Dorsolateral prefrontal cortex (tissue), 120 donors: ENCODE measurements at regions of chr19 and their contacts with region 1.

Region 1: GRCh38 chr19:48363810-48364563 is at the starts of genes SYNGR4 and TMEM143:
- DNase-seq: peak; percentile 96 to 99 (median 98)
- H3K4me3 ChIP-seq: peak within 1 kb of the TSS; percentile 49 to 95 (median 79)
- H3K27ac ChIP-seq: peak within 1 kb of the TSS; percentile 83 to 100 (median 99)
- H3K27me3 ChIP-seq: no peaks in the 10 kb centered on the region
- CTCF ChIP-seq: peak in 21 of 56 donors; percentile 5 to 49 (median 19)
- total RNA-seq, gene SYNGR4: 0.50 to 3.0 (median 0.83) TPM in 13 of 120 experiments, not detected in the others
- total RNA-seq, gene TMEM143: 9.2 to 32.0 (median 16.5) TPM

Region 2: DNA sequence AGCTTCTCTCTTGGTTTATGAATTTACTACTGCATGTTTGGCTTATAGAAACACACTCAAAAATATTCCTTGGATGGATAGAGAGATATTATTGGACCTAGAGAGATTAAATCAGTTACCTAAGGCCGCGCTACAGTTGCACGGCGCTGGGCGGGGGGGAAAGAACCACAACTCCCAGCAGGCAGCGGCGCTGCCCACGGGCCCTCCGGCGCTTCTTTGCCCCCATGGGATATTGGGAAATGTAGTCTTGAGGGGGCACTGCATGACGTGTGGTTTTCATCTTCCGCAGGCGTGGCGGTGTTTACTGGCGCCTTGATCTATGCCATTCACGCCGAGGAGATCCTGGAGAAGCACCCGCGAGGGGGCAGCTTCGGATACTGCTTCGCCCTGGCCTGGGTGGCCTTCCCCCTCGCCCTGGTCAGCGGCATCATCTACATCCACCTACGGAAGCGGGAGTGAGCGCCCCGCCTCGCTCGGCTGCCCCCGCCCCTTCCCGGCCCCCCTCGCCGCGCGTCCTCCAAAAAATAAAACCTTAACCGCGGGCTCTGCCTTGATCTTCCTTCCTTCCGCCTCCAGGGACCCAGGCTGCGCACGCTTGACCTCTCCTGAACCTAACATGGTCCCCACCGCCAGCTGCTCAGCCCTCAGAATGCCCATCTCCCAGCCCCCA is 33.8 kb before region 1 on chr19:
- intact Hi-C with region 1: loop called in 1 of 2 experiments (anchors 1 kb)
- DNase-seq: peak; percentile 81 to 94 (median 92)
- H3K4me3 ChIP-seq: peak overlapping the region; percentile 52 to 93 (median 75)
- H3K27ac ChIP-seq: peak overlapping the region; percentile 73 to 99 (median 96)
- H3K27me3 ChIP-seq: no peaks in the 10 kb centered on the region
- CTCF ChIP-seq: peak in 49 of 56 donors; percentile 8 to 64 (median 39)

Region 3: DNA sequence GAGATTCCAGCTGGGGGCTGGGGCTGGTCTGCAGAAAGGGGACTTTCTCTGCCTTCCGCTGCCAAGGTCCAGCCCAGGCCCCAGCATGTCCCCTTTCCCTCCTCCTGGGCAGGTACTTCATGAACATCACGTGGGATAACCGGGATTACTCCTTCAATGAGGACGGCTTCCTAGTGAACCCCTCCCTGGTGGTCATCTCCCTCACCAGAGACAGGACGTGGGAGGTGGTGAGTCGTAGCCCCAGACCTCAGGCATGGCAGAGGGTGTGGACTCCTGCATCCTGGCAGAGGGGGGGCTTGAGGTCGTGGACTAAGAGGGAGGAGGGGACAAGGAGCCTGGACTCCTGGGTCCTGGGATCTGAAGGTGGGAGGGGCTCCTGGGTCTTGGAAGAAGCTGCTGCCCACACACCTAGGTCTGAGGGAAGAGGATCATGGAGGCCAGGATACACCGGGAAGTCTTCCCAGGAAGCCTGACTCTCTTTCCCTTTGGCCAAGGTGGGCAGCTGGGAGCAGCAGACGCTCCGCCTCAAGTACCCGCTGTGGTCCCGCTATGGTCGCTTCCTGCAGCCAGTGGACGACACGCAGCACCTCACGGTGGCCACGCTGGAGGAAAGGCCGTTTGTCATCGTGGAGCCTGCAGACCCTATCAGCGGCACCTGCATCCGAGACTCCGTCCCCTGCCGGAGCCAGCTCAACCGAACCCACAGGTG is 50.0 kb after region 1 on chr19:
- intact Hi-C with region 1: no loop called
- DNase-seq: no peak
- H3K4me3 ChIP-seq: peak overlapping the region in 1 of 59 donors; percentile 18
- H3K27ac ChIP-seq: no peak overlapping the region
- H3K27me3 ChIP-seq: peaks cover 0 to 35% (median 0%) of the 10 kb centered on the region in 45 donors
- CTCF ChIP-seq: no peak

Region 4: DNA sequence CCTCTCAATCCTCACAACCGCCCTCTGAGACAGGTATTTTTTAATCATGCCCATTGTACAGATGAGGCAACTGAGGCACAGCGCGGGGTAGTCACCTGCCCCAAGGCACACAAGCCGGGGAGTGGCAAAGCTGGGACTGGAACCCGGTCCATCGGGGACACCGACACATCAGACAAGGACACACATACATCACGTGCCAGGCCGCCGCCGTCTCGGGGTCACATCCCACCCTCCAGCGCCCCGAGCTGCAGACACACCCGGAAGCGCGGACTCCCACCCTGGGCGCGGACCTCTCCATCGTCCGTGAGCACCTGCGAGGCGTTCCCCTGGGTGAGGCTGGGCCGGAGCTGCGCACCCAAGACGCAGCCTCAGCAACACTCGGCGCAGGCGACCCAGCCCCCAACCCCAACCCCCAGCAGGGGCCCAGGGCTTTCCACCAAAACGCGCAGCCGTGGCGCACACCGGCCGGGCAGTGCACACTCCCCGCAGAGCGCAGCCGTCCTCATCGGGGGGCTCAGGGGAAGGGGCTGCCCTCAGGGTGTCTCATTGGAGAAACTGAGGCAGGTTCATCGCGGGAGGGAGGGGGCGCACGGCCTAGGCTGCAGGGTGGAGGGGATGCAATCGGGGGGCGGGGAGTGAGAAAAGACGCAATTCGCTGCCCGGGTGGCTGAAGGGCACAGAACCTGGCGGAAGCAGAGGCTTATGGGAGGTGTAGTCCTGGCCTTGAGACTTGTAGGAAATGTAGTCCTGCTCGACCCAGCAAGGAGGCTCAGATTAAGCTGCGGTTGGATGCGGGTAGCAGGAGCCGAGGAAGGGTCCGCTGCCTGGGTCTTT is 149.5 kb after region 1 on chr19:
- intact Hi-C with region 1: loop called in 1 of 2 experiments (anchors 2 kb)
- DNase-seq: peak; percentile 67 to 93 (median 90)
- H3K4me3 ChIP-seq: peak overlapping the region; percentile 52 to 87 (median 77)
- H3K27ac ChIP-seq: peak overlapping the region in 58 of 59 donors; percentile 74 to 97 (median 90)
- H3K27me3 ChIP-seq: peaks cover 0 to 3% (median 0%) of the 10 kb centered on the region in 45 donors
- CTCF ChIP-seq: peak in 16 of 56 donors; percentile 6 to 35 (median 18)